Lower leg skin (tissue), 4 donors: ENCODE measurements at regions of chr2 and their contacts with region 1.

Region 1: GRCh38 chr2:47897883-47898731 is 8.2 kb downstream of the FBXO11 start:
- DNase-seq: no peak
- H3K4me3 ChIP-seq: no peak overlapping the region
- CTCF ChIP-seq: no peak
- POLR2A ChIP-seq: no peak

Region 2: DNA sequence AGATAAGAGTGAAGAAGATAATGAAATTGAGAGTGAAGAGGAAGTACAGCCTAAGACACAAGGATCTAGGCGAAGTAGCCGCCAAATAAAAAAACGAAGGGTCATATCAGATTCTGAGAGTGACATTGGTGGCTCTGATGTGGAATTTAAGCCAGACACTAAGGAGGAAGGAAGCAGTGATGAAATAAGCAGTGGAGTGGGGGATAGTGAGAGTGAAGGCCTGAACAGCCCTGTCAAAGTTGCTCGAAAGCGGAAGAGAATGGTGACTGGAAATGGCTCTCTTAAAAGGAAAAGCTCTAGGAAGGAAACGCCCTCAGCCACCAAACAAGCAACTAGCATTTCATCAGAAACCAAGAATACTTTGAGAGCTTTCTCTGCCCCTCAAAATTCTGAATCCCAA is 99.5 kb before region 1 on chr2:
- intact Hi-C with region 1: loop called (anchors 10 kb)
- DNase-seq: peak in 1 of 2 donors; percentile 21
- H3K4me3 ChIP-seq: no peak overlapping the region
- CTCF ChIP-seq: no peak
- POLR2A ChIP-seq: no peak